A549 (cell line): ENCODE measurements at regions of chr15 and their contacts with region 1.

Region 1: GRCh38 chr15:78638658-78639314 is 2.2 kb downstream of the CHRNB4 start:
- DNase-seq: peak; percentile 70 to 93
- ATAC-seq: peak; percentile 64 to 89
- H3K4me3 ChIP-seq: no peak overlapping the region
- H3K27ac ChIP-seq: no peak overlapping the region
- H3K4me1 ChIP-seq: 0 out of 3 replicates have a peak, but pooled peaks cover 3% of the 10 kb centered on the region
- CTCF ChIP-seq: peak; percentile 92
- EP300 ChIP-seq: no peak
- POLR2A ChIP-seq: no peak
- RAD21 ChIP-seq: peak; percentile 87 to 88

Region 2: DNA sequence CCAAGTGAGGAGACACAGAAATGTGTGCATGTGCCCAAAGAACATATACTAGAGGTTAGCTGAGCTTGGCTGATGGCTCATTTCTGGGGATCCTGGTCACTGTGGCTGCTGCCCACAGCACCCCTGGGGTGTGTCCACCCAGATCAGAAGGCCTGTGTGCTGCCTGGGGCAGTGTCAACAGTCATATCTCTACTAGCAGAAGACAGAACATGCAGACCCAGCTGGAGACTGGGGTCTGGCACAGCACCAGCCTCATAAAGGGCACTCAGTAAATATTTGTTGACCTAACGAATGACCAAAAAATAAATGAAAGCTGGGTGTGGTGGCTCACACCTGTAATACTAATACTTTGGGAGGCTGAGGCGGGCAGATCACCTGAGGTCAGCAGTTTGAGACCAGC is 34.4 kb before region 1 on chr15:
- CTCF ChIA-PET with region 1: interaction called, 11 read pairs
- POLR2A ChIA-PET with region 1: no interaction called
- DNase-seq: no peak
- ATAC-seq: peak in 1 of 2 experiments; percentile 33; a peak in 3 of 6 replicates
- H3K4me3 ChIP-seq: no peak overlapping the region
- H3K27ac ChIP-seq: no peak overlapping the region
- H3K4me1 ChIP-seq: no peaks in the 10 kb centered on the region
- CTCF ChIP-seq: no peak
- EP300 ChIP-seq: no peak
- POLR2A ChIP-seq: no peak
- RAD21 ChIP-seq: no peak

Region 3: GRCh38 chr15:78654272-78654671 is 15.5 kb after region 1 on chr15:
- CTCF ChIA-PET with region 1: interaction called, 51 read pairs
- POLR2A ChIA-PET with region 1: no interaction called
- DNase-seq: no peak
- ATAC-seq: peak; percentile 44 to 54; a peak in 3 of 6 replicates
- H3K4me3 ChIP-seq: no peak overlapping the region
- H3K27ac ChIP-seq: no peak overlapping the region
- H3K4me1 ChIP-seq: no peaks in the 10 kb centered on the region
- CTCF ChIP-seq: no peak
- EP300 ChIP-seq: no peak
- POLR2A ChIP-seq: no peak
- RAD21 ChIP-seq: no peak

Region 4: GRCh38 chr15:78671626-78672211 is 32.9 kb after region 1 on chr15:
- CTCF ChIA-PET with region 1: interaction called, 35 read pairs
- POLR2A ChIA-PET with region 1: no interaction called
- DNase-seq: no peak
- ATAC-seq: no peak
- H3K4me3 ChIP-seq: no peak overlapping the region
- H3K27ac ChIP-seq: peak overlapping the region in 1 of 2 experiments; percentile 61; a peak in 3 of 6 replicates
- H3K4me1 ChIP-seq: peaks cover 6% of the 10 kb centered on the region; the same call in 1 of the 3 replicates
- CTCF ChIP-seq: no peak
- EP300 ChIP-seq: no peak
- POLR2A ChIP-seq: no peak
- RAD21 ChIP-seq: no peak

Region 5: DNA sequence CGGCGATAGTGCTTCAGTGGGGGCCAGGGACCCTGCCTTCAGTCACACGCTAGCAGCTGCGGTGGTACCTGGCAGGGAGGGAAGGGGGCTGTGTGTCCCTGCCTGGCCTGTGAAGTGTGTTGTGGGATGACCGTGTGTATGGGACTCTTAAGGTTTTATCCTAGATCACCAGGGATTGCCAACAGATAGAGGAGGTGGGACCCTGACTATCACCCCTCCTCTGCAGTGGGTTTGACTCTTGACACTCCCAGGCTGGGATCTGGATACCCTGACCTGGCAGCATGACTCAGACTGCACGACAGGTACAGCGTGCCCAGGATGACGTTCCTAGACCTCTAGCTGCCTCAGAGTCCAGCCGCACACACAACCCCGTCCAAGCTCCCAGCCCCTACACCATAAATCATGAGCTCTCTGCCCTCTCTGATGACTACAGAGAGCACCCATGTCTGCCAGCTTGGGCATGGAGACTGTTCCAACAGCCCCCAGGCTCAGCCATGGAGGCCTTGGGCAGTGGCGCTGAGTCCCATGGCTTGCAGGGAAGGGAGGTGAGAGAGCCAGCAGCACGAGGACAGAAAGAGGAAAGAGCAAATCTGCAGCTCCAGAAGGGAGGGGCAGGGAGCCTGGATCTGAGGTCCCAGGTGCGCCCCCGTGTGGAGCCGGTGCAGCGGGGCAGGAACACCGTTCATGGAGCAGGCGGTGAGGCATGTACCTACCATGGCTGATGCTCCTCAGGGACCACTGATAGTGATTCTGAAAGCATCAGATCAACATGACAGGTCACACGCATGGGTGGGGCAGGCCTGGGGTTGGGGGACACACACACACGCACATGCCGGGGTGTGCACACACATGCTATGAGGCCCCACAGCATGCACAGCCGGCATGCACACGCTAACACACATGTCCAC is 101.5 kb after region 1 on chr15:
- CTCF ChIA-PET with region 1: interaction called, 89 read pairs
- POLR2A ChIA-PET with region 1: no interaction called
- DNase-seq: peak in 1 of 2 experiments; percentile 88
- ATAC-seq: peak; percentile 84 to 97
- H3K4me3 ChIP-seq: no peak overlapping the region
- H3K27ac ChIP-seq: peak overlapping the region; percentile 65 to 80
- H3K4me1 ChIP-seq: peaks cover 4% of the 10 kb centered on the region
- CTCF ChIP-seq: peak; percentile 69
- EP300 ChIP-seq: no peak
- POLR2A ChIP-seq: no peak
- RAD21 ChIP-seq: peak; percentile 60 to 67